ENCODE measurements at regions of chr19 and their contacts with region 1.

Region 1: DNA sequence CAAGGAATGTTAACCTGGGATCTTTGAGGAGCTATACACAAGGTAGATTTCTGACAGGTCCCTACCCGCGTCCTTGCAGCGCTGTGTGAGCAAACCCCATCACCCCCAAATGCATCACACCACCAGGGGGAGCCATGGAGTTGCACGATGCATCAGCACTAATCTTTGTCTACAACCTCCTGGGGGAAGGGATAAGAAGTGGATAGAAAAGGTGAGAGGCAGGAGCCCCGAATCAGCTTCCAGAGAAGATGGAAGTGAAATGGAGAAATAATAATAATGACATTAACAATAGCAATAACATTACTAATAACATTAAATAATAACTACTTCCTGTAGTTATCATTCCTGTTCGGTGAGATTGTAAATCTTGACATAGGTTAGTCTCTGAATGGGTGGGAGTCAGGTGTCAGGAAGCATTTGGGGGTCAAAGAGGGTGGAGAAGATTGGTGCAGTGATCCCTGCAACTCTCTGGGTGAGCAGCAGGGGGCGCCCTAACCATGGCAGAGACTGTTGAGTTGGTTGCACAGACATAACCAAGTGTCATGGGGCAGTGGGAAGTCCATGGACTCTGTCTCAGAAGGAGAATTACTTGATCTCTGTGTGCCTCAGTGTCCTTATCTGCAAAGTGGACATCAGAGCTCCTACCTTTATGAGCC is 16.5 kb downstream of the SIGLEC7 start:
- DNase-seq: peak; percentile 7
- ATAC-seq: peak; percentile 59
- H3K4me3 ChIP-seq: no peak overlapping the region
- H3K27ac ChIP-seq: no peak overlapping the region
- H3K4me1 ChIP-seq: no peaks in the 10 kb centered on the region
- H3K27me3 ChIP-seq: peaks cover 1% of the 10 kb centered on the region; the same call in 1 of the 2 replicates
- CTCF ChIP-seq: peak; percentile 44
- POLR2A ChIP-seq: no peak
- RAD21 ChIP-seq: peak; percentile 52

Region 2: GRCh38 chr19:51136851-51137551 is 21.6 kb before region 1 on chr19:
- CTCF ChIA-PET with region 1: no interaction called
- POLR2A ChIA-PET with region 1: no interaction called
- dilution Hi-C with region 1: no loop called
- in situ Hi-C with region 1: no loop called
- intact Hi-C with region 1: no loop called
- DNase-seq: no peak
- ATAC-seq: no peak
- H3K4me3 ChIP-seq: no peak overlapping the region
- H3K27ac ChIP-seq: no peak overlapping the region
- H3K4me1 ChIP-seq: no peaks in the 10 kb centered on the region
- H3K27me3 ChIP-seq: peaks cover 7% of the 10 kb centered on the region
- CTCF ChIP-seq: no peak
- POLR2A ChIP-seq: no peak
- RAD21 ChIP-seq: no peak

Region 3: DNA sequence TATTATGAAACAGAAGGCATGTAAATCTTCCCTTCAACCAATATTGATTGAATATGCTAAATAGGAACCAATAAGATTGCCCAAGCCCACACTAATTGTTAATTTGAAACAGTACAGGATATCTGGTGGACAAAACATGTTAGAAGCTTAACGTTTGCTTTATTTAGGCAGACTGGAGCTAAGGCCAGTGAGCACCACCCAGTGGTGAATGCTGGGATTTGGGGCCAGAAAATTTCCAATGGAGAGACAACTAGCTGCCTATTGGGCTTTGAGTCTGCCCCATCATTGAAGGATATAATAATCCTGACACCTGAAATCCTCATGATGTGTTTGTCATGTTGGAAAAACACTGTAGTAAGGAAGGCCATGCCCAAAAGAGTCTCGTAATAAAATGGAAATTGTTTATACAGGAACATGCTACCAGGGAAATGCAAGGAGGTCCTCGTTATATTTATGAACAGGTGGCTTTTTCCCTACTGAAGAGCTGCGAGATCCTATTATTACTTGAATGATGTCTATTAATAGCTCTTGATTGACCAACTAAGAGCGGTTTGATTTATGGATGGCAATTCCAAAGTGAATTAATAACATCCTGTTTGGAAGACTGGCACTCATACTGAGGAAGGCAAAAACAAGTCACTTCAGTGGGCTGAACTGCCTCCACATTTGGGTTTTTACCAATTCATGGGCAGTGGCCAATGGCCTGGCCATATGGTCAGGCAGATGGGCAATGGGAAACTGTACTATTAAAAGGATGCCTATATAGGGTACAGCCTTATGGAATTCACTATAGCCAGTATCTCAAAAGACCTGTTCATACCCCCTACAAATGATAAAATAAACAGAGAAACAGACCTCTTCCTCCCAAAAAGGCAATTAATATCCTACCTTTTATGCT is 101.0 kb after region 1 on chr19:
- CTCF ChIA-PET with region 1: no interaction called
- POLR2A ChIA-PET with region 1: no interaction called
- dilution Hi-C with region 1: no loop called
- in situ Hi-C with region 1: no loop called
- intact Hi-C with region 1: loop called (anchors 1 kb)
- DNase-seq: peak; percentile 22
- ATAC-seq: peak; percentile 67
- H3K4me3 ChIP-seq: no peak overlapping the region
- H3K27ac ChIP-seq: no peak overlapping the region
- H3K4me1 ChIP-seq: no peaks in the 10 kb centered on the region
- H3K27me3 ChIP-seq: no peaks in the 10 kb centered on the region
- CTCF ChIP-seq: peak; percentile 46
- POLR2A ChIP-seq: no peak
- RAD21 ChIP-seq: peak; percentile 37

Measured in IMR-90 (cell line).